Activated T-helper 1 cell treated with anti-CD3 and anti-CD28 coated beads, Interleukin-12 subunit alpha, Interleukin-12 subunit beta, Interleukin-2, Interleukin-4 antibody, amounts not matched to agents 30 ng/mL and 10 ng/mL and 1 ng/mL, durations not matched to agents 14 hours and 24 hours and 36 hours (primary cell): ENCODE measurements at regions of chr7 and their contacts with region 1.

Region 1: DNA sequence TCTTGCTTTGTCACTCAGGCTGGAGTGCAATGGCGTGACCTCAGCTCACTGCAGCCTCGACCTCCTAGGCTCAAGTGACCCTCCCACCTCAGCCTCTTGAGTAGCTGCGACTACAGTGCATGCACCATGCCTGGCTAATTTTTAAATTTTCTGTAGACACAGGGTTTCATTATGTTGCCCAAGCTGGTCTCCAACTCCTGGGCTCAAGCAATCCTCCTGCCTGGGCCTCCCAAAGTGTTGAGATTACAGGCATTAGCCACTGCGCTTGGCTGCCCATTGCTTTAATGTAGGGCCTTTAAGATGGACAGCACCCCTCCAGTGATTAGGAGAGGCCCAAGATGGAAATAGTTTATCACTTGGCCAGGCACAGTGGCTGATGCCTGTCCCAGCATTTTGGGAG is 39.4 kb downstream of the NIPSNAP2 start:
- DNase-seq: no peak
- H3K4me3 Mint-ChIP-seq: no peak overlapping the region
- H3K27ac Mint-ChIP-seq: no peak overlapping the region
- H3K4me1 Mint-ChIP-seq: peaks cover 15% of the 10 kb centered on the region
- H3K27me3 Mint-ChIP-seq: no peaks in the 10 kb centered on the region

Region 2: GRCh38 chr7:56063882-56064625 is 60.3 kb after region 1 on chr7 and contains the start of gene SUMF2:
- intact Hi-C with region 1: loop called (anchors 2 kb)
- DNase-seq: peak; percentile 88
- H3K4me3 Mint-ChIP-seq: peak within 1 kb of the TSS; percentile 94
- H3K27ac Mint-ChIP-seq: peak within 1 kb of the TSS; percentile 87
- H3K4me1 Mint-ChIP-seq: peaks cover 46% of the 10 kb centered on the region
- H3K27me3 Mint-ChIP-seq: no peaks in the 10 kb centered on the region
- total RNA-seq, gene SUMF2: 157 and 166 TPM in 2 replicates

Region 3: GRCh38 chr7:56199639-56200038 is 195.9 kb after region 1 on chr7:
- intact Hi-C with region 1: no loop called
- DNase-seq: no peak
- H3K4me3 Mint-ChIP-seq: no peak overlapping the region
- H3K27ac Mint-ChIP-seq: no peak overlapping the region
- H3K4me1 Mint-ChIP-seq: no peaks in the 10 kb centered on the region
- H3K27me3 Mint-ChIP-seq: no peaks in the 10 kb centered on the region